ENCODE measurements at regions of chr4 and their contacts with region 1.

Region 1: DNA sequence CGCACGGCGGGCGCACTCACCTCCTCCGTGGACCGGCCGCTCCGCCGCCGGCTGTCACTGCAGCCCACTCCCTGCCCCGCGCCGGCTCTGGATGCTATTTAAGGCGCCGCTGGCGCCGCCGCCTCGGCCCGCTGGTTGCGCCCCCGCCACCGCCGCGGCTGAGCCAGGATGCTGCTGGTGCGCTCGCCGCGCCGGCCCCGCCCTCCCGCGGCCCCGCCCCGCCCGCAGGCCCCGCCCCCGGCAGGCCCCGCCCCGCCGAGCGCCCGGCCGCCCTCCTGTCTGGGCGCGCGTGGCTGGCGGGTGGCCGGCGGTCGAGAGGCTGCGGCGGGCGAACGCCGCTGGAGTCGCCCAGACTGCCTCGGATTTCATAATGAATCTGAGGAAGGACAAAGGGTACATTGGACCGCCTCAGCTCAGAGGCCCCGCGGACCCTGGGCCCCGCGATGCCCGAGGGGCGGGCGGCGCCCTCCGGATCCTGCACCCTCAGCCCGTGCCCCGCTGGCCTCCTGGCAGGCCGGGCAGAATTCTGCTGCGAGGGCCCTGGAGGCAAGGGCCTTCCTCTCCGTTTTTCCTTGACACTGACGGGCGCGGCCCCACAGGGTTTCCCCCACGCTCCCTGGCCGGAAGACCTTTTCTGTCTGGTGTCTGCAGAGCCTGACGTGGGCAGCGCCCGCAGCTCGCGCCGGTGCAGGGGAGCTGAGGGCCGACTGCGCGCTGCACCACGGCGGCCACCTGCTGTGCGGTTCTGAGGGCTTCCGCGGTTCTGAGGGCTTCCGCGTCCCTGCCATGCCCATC is at the start of gene ACSL1:
- DNase-seq: peak; percentile 48 to 88 (median 77)
- ATAC-seq: peak; percentile 84
- H3K4me3 ChIP-seq: peak within 1 kb of the TSS; percentile 56 to 78
- H3K4me3 Mint-ChIP-seq: peak within 1 kb of the TSS; percentile 91
- H3K27ac ChIP-seq: peak within 1 kb of the TSS; percentile 31 to 54
- H3K27ac Mint-ChIP-seq: peak within 1 kb of the TSS; percentile 90
- H3K4me1 ChIP-seq: peaks cover 22% of the 10 kb centered on the region
- H3K4me1 Mint-ChIP-seq: peaks cover 39% of the 10 kb centered on the region
- H3K27me3 ChIP-seq: no peaks in the 10 kb centered on the region
- H3K27me3 Mint-ChIP-seq: no peaks in the 10 kb centered on the region
- CTCF ChIP-seq: no peak
- total RNA-seq, gene ACSL1: 18.4 to 21.3 TPM

Region 2: GRCh38 chr4:182917182-182918043 is 1908.7 kb before region 1 on chr4 and contains the start of gene DCTD:
- CTCF ChIA-PET with region 1: no interaction called
- POLR2A ChIA-PET with region 1: no interaction called
- intact Hi-C with region 1: loop called in 1 of 2 experiments (anchors 10 kb)
- DNase-seq: peak; percentile 47 to 89 (median 80)
- ATAC-seq: peak; percentile 72
- H3K4me3 ChIP-seq: peak within 1 kb of the TSS; percentile 82 to 85
- H3K4me3 Mint-ChIP-seq: peak within 1 kb of the TSS; percentile 89
- H3K27ac ChIP-seq: peak within 1 kb of the TSS; percentile 96 to 97
- H3K27ac Mint-ChIP-seq: peak within 1 kb of the TSS; percentile 92
- H3K4me1 ChIP-seq: peaks cover 32% of the 10 kb centered on the region
- H3K4me1 Mint-ChIP-seq: peaks cover 60% of the 10 kb centered on the region
- H3K27me3 ChIP-seq: no peaks in the 10 kb centered on the region
- H3K27me3 Mint-ChIP-seq: peaks cover under 1% of the 10 kb centered on the region
- CTCF ChIP-seq: peak; percentile 20
- total RNA-seq, gene DCTD: 49.6 to 57.0 TPM

Region 3: DNA sequence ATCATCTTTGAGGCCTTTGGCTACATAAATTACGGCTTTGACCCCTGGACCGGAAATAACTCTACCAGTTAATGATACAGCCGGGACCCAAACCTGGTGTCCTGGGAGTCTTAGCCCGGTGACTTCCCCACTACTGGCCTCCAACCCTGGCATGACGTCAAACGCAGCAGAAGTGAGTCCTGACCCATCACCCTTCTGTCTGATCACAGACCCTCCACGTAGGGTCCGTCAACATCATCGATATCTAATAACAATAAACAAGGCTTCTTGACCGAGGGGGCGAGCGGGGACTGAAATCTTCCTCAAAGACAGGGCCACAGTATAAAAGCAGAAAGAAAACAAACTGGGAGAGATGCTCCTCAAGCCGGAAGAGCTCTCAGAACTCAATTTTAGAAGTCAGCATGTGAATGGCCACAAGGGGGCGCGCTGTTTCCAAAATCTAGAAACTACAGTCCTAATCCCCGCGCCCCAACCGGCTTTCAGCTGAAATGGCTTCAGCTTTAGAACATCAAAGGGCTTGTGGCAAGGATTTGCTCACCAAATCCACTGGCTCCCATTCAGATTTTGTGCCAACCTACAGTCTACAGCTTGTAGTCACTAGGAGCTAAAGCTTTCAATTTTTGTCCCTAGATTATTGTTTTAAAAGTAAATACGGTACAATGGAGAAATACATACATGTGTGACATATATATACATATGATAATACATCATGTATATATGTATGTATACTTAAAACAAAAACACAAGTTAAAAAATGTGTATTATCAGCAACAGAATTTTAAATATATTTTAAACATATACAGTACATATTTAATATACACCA is 562.0 kb before region 1 on chr4:
- CTCF ChIA-PET with region 1: no interaction called
- POLR2A ChIA-PET with region 1: no interaction called
- intact Hi-C with region 1: loop called (anchors 5 kb)
- DNase-seq: peak; percentile 83 to 97 (median 93)
- ATAC-seq: peak; percentile 57
- H3K4me3 ChIP-seq: no peak overlapping the region
- H3K4me3 Mint-ChIP-seq: no peak overlapping the region
- H3K27ac ChIP-seq: no peak overlapping the region
- H3K27ac Mint-ChIP-seq: no peak overlapping the region
- H3K4me1 ChIP-seq: peaks cover 7% of the 10 kb centered on the region
- H3K4me1 Mint-ChIP-seq: peaks cover 29% of the 10 kb centered on the region
- H3K27me3 ChIP-seq: no peaks in the 10 kb centered on the region
- H3K27me3 Mint-ChIP-seq: no peaks in the 10 kb centered on the region
- CTCF ChIP-seq: peak; percentile 73

Region 4: DNA sequence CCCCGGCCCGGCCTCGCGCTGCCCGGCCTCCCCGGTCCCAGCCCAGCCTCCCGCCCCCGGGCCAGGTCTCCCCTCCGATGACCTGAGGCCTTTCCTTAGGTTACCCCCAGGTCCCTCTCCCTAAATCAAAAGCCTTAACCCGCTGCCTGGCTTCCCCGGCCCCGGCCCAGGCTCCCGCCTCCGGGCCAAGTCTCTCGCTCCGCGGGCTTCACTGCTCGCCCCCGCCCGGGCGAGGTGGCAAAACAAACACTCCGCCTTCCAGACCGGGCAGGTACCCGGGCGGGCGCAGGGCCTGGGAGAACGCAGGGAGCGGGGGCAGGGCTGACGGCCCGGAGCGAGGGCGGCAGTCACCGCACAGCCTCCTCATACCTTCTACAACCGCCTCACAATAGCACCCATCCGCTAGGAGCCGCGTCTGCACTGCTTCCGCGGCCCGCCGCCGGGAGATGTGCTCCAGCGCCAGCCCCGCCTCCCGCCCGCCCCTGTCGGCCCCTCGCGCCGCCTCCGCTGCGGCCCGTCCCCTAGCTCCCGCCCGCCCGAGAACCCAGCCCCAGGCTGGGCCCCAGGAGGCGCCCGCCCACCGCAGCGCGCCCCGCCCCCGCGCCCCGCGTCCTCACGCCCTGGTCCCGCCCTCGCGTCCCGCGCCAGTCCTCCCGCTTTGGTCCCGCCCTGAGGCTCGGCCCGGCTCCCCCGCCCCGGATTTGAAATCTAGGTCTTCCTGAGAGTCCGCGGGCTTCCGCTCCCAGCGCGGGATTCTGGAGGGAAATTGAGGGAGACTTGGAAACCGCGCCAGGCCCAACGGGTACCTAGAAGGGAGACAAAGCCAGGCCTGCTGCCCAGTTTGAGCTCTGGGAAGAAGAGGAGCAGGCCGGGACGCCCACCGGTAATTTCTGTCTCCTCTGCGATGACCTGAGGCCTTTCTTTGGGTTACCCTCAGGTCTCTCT is 176.8 kb before region 1 on chr4 and contains the starts of genes CASP3 and PRIMPOL:
- CTCF ChIA-PET with region 1: no interaction called
- POLR2A ChIA-PET with region 1: interaction called, 4 read pairs
- intact Hi-C with region 1: loop called (anchors 1 kb)
- DNase-seq: peak; percentile 93 to 98 (median 95)
- ATAC-seq: peak; percentile 90
- H3K4me3 ChIP-seq: peak within 1 kb of the TSS; percentile 95 to 98
- H3K4me3 Mint-ChIP-seq: peak within 1 kb of the TSS; percentile 94
- H3K27ac ChIP-seq: peak within 1 kb of the TSS; percentile 77 to 87
- H3K27ac Mint-ChIP-seq: peak within 1 kb of the TSS; percentile 96
- H3K4me1 ChIP-seq: peaks cover 43% of the 10 kb centered on the region
- H3K4me1 Mint-ChIP-seq: peaks cover 54% of the 10 kb centered on the region
- H3K27me3 ChIP-seq: no peaks in the 10 kb centered on the region
- H3K27me3 Mint-ChIP-seq: no peaks in the 10 kb centered on the region
- CTCF ChIP-seq: no peak
- total RNA-seq, gene CASP3: 14.4 to 15.7 TPM
- total RNA-seq, gene PRIMPOL: 6.0 to 7.3 TPM

Region 5: DNA sequence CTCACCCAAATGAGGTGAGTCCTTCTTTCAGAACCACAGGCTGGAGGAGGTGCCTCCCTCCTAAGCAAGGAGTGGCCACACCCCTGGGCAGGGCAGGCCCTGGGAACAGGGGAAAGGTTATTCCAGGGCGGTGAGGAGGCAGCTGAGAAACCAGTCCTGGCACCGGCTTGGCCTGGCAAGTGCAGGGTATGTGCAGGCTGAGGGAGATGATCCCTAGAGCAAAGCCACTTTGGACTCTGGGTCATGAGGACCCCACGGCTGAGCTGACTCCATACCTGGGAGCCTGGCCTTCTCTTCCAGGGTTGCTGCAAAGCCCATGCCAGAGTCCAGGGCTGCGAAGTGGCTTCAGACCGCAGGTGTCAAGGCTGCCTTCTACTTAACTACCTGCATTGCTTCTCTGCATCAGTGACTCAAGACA is 142.7 kb after region 1 on chr4:
- CTCF ChIA-PET with region 1: no interaction called
- POLR2A ChIA-PET with region 1: no interaction called
- intact Hi-C with region 1: loop called in 1 of 2 experiments (anchors 10 kb)
- DNase-seq: peak in 1 of 9 experiments; percentile 47
- ATAC-seq: no peak
- H3K4me3 ChIP-seq: no peak overlapping the region
- H3K4me3 Mint-ChIP-seq: no peak overlapping the region
- H3K27ac ChIP-seq: no peak overlapping the region
- H3K27ac Mint-ChIP-seq: no peak overlapping the region
- H3K4me1 ChIP-seq: no peaks in the 10 kb centered on the region
- H3K4me1 Mint-ChIP-seq: peaks cover 5% of the 10 kb centered on the region
- H3K27me3 ChIP-seq: no peaks in the 10 kb centered on the region
- H3K27me3 Mint-ChIP-seq: peaks cover 9% of the 10 kb centered on the region
- CTCF ChIP-seq: no peak

Region 6: GRCh38 chr4:185425647-185426352 is 599.7 kb after region 1 on chr4 and contains the start of gene UFSP2:
- CTCF ChIA-PET with region 1: no interaction called
- POLR2A ChIA-PET with region 1: no interaction called
- intact Hi-C with region 1: loop called in 1 of 2 experiments (anchors 10 kb)
- DNase-seq: peak; percentile 75 to 97 (median 89)
- ATAC-seq: peak; percentile 86
- H3K4me3 ChIP-seq: peak within 1 kb of the TSS; percentile 87 to 90
- H3K4me3 Mint-ChIP-seq: peak within 1 kb of the TSS; percentile 83
- H3K27ac ChIP-seq: peak within 1 kb of the TSS; percentile 97 to 99
- H3K27ac Mint-ChIP-seq: peak within 1 kb of the TSS; percentile 100
- H3K4me1 ChIP-seq: peaks cover 18% of the 10 kb centered on the region
- H3K4me1 Mint-ChIP-seq: peaks cover 36% of the 10 kb centered on the region
- H3K27me3 ChIP-seq: no peaks in the 10 kb centered on the region
- H3K27me3 Mint-ChIP-seq: peaks cover 5% of the 10 kb centered on the region
- CTCF ChIP-seq: no peak
- total RNA-seq, gene UFSP2: 13.4 to 17.4 TPM

Measured in CD8-positive, alpha-beta T cell (primary cell).